ENCODE measurements at regions of chr9 and their contacts with region 1.

Region 1: GRCh38 chr9:95127249-95128176 is 190.0 kb downstream of the FANCC start:
- DNase-seq: peak; percentile 88
- ATAC-seq: peak; percentile 94
- H3K4me3 Mint-ChIP-seq: no peak overlapping the region
- H3K27ac Mint-ChIP-seq: no peak overlapping the region
- H3K4me1 Mint-ChIP-seq: no peaks in the 10 kb centered on the region
- H3K27me3 Mint-ChIP-seq: no peaks in the 10 kb centered on the region

Region 2: GRCh38 chr9:94668418-94668932 is 459.0 kb before region 1 on chr9:
- CTCF ChIA-PET with region 1: interaction called, 16 read pairs
- POLR2A ChIA-PET with region 1: no interaction called
- intact Hi-C with region 1: loop called (anchors 1 to 5 kb)
- DNase-seq: no peak
- ATAC-seq: no peak
- H3K4me3 Mint-ChIP-seq: peak overlapping the region; percentile 71
- H3K27ac Mint-ChIP-seq: no peak overlapping the region
- H3K4me1 Mint-ChIP-seq: peaks cover 11% of the 10 kb centered on the region
- H3K27me3 Mint-ChIP-seq: peaks cover 4% of the 10 kb centered on the region

Region 3: DNA sequence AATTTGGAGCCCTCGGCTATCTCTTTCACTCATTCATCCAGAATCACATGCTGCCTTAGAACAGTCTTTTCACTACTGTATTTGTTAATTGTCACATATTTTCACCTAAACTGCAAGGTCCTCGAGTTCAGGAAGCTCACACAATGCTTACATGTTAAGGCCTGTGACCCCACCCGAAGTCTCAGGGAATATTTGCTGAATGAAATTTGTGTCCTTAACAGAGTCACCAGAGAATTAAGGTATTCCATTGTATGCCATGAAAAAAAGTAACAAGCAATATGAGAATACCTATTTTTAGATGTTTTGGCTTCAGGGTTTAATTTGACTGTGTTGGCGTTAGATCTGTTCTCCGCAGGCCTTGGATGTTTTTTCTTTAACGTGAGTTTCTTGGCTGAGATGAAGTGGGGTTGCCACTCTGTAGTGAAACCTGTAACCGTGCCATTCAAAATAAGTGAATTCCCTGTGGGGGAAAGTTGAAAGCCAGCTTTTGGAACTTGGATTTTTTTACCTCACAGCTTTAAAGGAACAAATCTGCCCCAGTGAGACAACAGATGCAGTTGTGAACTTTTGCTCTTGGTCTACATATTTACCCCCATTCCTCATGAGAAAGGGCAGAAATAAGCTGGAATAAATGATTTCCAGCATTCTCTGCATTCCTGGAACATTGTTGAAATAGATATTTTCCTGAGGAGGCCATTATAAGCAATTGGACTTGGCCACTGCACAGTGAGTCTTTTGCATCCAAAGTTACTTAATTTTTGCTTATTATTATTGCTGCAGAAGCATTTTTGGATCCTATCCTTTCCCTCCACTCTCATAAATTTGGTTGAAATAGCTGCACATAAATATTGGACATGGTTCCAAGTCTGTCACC is 452.3 kb before region 1 on chr9:
- CTCF ChIA-PET with region 1: interaction called, 106 read pairs
- POLR2A ChIA-PET with region 1: no interaction called
- intact Hi-C with region 1: no loop called
- DNase-seq: no peak
- ATAC-seq: no peak
- H3K4me3 Mint-ChIP-seq: no peak overlapping the region
- H3K27ac Mint-ChIP-seq: no peak overlapping the region
- H3K4me1 Mint-ChIP-seq: no peaks in the 10 kb centered on the region
- H3K27me3 Mint-ChIP-seq: peaks cover 15% of the 10 kb centered on the region

Region 4: GRCh38 chr9:94681508-94681907 is 446.0 kb before region 1 on chr9:
- CTCF ChIA-PET with region 1: interaction called, 106 read pairs
- POLR2A ChIA-PET with region 1: no interaction called
- intact Hi-C with region 1: loop called (anchors 1 kb)
- DNase-seq: peak; percentile 71
- ATAC-seq: peak; percentile 92
- H3K4me3 Mint-ChIP-seq: no peak overlapping the region
- H3K27ac Mint-ChIP-seq: no peak overlapping the region
- H3K4me1 Mint-ChIP-seq: no peaks in the 10 kb centered on the region
- H3K27me3 Mint-ChIP-seq: peaks cover 21% of the 10 kb centered on the region

Region 5: GRCh38 chr9:94783102-94783664 is 344.3 kb before region 1 on chr9:
- CTCF ChIA-PET with region 1: interaction called, 47 read pairs
- POLR2A ChIA-PET with region 1: no interaction called
- intact Hi-C with region 1: loop called (anchors 1 to 2 kb)
- DNase-seq: peak; percentile 58
- ATAC-seq: peak; percentile 31
- H3K4me3 Mint-ChIP-seq: no peak overlapping the region
- H3K27ac Mint-ChIP-seq: no peak overlapping the region
- H3K4me1 Mint-ChIP-seq: peaks cover 14% of the 10 kb centered on the region
- H3K27me3 Mint-ChIP-seq: no peaks in the 10 kb centered on the region

Region 6: GRCh38 chr9:95147452-95148207 is 20.1 kb after region 1 on chr9:
- CTCF ChIA-PET with region 1: interaction called, 11 read pairs
- POLR2A ChIA-PET with region 1: no interaction called
- intact Hi-C with region 1: no loop called
- DNase-seq: no peak
- ATAC-seq: no peak
- H3K4me3 Mint-ChIP-seq: no peak overlapping the region
- H3K27ac Mint-ChIP-seq: no peak overlapping the region
- H3K4me1 Mint-ChIP-seq: peaks cover 3% of the 10 kb centered on the region
- H3K27me3 Mint-ChIP-seq: no peaks in the 10 kb centered on the region

Region 7: DNA sequence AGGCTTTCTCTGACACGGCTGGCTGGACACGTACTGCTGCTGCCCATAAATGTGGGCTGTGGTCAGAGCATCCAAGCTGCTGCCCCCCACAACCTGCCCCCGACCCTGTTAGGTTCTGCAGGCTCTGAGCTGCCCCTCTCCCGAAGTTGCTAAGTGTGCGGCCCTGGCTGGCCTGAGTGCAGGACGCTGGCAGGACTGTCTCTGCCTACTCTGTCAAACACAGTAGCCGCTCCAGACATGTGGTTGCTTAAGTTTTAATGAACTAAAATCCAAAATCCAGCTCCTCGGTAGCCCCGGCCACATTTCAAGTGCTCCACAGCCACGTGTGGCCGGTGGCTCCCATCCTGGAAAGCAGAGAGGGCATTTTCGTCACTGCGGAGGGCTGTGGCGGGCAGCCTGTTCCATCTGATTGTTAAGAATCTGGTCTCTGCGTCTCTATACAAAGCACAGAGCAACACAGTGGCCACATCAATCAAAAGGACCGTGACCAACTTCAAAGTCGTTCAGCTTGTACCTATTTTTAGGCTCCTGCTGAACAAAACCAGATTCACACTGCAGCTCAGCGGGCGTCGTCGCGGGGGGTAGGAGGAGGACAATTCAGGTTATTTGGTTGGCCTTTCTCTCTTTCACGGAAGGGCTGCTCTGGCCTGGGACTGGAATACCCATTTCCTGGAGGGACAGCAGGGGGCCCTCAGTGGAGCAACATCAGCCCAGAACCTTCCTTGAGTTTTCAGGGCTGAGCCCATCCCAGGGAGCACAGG is 320.3 kb after region 1 on chr9:
- CTCF ChIA-PET with region 1: no interaction called
- POLR2A ChIA-PET with region 1: no interaction called
- intact Hi-C with region 1: no loop called
- DNase-seq: no peak
- ATAC-seq: no peak
- H3K4me3 Mint-ChIP-seq: no peak overlapping the region
- H3K27ac Mint-ChIP-seq: no peak overlapping the region
- H3K4me1 Mint-ChIP-seq: peaks cover 3% of the 10 kb centered on the region
- H3K27me3 Mint-ChIP-seq: no peaks in the 10 kb centered on the region

Measured in activated CD4-positive, alpha-beta T cell treated with anti-CD3 and anti-CD28 coated beads for 36 hours (primary cell).